T-cell (primary cell): ENCODE measurements at regions of chr6 and their contacts with region 1.

Region 1: GRCh38 chr6:32413427-32414047 is 6.6 kb upstream of the BTNL2 start:
- DNase-seq: peak; percentile 57 to 92 (median 79)
- ATAC-seq: peak; percentile 86 to 90 (median 88)
- H3K4me3 ChIP-seq: no peak overlapping the region
- H3K4me3 Mint-ChIP-seq: no peak overlapping the region
- H3K27ac ChIP-seq: no peak overlapping the region
- H3K27ac Mint-ChIP-seq: peak overlapping the region in 1 of 2 donors; percentile 50
- H3K4me1 ChIP-seq: peaks cover 0 to 9% of the 10 kb centered on the region in 2 experiments
- H3K4me1 Mint-ChIP-seq: peaks cover 11 to 16% (median 11%) of the 10 kb centered on the region in 3 donors
- H3K27me3 ChIP-seq: peaks cover 5 to 26% of the 10 kb centered on the region in 2 experiments
- H3K27me3 Mint-ChIP-seq: peaks cover 43 to 47% of the 10 kb centered on the region in 2 donors

Region 2: DNA sequence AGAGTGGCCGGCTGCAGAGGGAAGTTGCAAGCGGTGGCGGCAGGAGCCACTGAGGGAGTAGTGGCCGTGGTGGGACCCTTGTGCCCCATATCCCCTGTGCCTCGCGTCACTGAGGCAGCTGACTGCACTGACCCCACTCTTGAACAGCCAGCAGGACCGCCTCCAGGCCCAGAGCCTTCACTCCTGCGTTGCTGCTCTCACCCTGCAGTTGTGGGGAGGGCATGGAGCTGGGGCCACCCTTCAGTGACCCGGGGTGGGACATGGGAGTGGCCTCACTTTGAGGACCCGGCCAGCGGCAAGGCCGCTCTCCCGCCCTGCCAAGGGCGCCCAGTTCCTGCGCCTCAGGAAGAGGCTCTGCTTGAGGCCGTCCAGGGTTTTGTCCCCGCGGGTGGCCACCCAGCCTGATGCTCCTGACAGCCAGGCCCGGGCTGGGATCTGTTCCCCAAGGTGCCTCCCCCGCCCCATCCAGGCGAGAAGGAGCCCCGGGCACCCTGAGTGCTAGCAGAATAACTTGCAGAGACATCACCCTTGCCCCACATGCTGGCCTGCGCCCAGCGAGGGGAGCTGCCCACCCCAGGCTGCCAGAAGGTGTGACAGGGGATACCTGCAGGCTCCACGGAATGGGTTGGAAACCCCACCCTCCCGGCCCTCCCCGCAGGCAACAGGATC is 70.6 kb after region 1 on chr6:
- CTCF ChIA-PET with region 1: no interaction called
- POLR2A ChIA-PET with region 1: no interaction called
- DNase-seq: no peak
- ATAC-seq: no peak
- H3K4me3 ChIP-seq: no peak overlapping the region
- H3K4me3 Mint-ChIP-seq: no peak overlapping the region
- H3K27ac ChIP-seq: no peak overlapping the region
- H3K27ac Mint-ChIP-seq: no peak overlapping the region
- H3K4me1 ChIP-seq: no peaks in the 10 kb centered on the region
- H3K4me1 Mint-ChIP-seq: no peaks in the 10 kb centered on the region
- H3K27me3 ChIP-seq: no peaks in the 10 kb centered on the region
- H3K27me3 Mint-ChIP-seq: peaks cover 1 to 16% of the 10 kb centered on the region in 2 donors

Region 3: GRCh38 chr6:32539839-32540238 is 126.3 kb after region 1 on chr6:
- CTCF ChIA-PET with region 1: no interaction called
- POLR2A ChIA-PET with region 1: no interaction called
- DNase-seq: no peak
- ATAC-seq: no peak
- H3K4me3 ChIP-seq: no peak overlapping the region
- H3K4me3 Mint-ChIP-seq: no peak overlapping the region
- H3K27ac ChIP-seq: no peak overlapping the region
- H3K27ac Mint-ChIP-seq: no peak overlapping the region
- H3K4me1 ChIP-seq: no peaks in the 10 kb centered on the region
- H3K4me1 Mint-ChIP-seq: no peaks in the 10 kb centered on the region
- H3K27me3 ChIP-seq: no peaks in the 10 kb centered on the region
- H3K27me3 Mint-ChIP-seq: peaks cover 0 to 11% of the 10 kb centered on the region in 2 donors

Region 4: GRCh38 chr6:32700391-32701040 is 287.0 kb after region 1 on chr6:
- CTCF ChIA-PET with region 1: interaction called, 3 to 19 read pairs
- POLR2A ChIA-PET with region 1: interaction called in 1 of 2 experiments, 6 read pairs
- DNase-seq: peak in 17 of 35 experiments; percentile 1 to 71 (median 10)
- ATAC-seq: peak in 2 of 4 experiments; percentile 50 to 70
- H3K4me3 ChIP-seq: no peak overlapping the region
- H3K4me3 Mint-ChIP-seq: no peak overlapping the region
- H3K27ac ChIP-seq: no peak overlapping the region
- H3K27ac Mint-ChIP-seq: no peak overlapping the region
- H3K4me1 ChIP-seq: peaks cover 0 to 3% of the 10 kb centered on the region in 2 experiments
- H3K4me1 Mint-ChIP-seq: peaks cover 0 to 6% (median 5%) of the 10 kb centered on the region in 3 donors
- H3K27me3 ChIP-seq: peaks cover 0 to 2% of the 10 kb centered on the region in 2 experiments
- H3K27me3 Mint-ChIP-seq: peaks cover 39 to 42% of the 10 kb centered on the region in 2 donors

Region 5: GRCh38 chr6:32785781-32786533 is 372.4 kb after region 1 on chr6:
- CTCF ChIA-PET with region 1: interaction called, 6 to 18 read pairs
- POLR2A ChIA-PET with region 1: no interaction called
- DNase-seq: peak in 12 of 35 experiments; percentile 8 to 66 (median 18)
- ATAC-seq: peak in 3 of 4 experiments; percentile 53 to 71 (median 67)
- H3K4me3 ChIP-seq: no peak overlapping the region
- H3K4me3 Mint-ChIP-seq: no peak overlapping the region
- H3K27ac ChIP-seq: no peak overlapping the region
- H3K27ac Mint-ChIP-seq: no peak overlapping the region
- H3K4me1 ChIP-seq: no peaks in the 10 kb centered on the region
- H3K4me1 Mint-ChIP-seq: no peaks in the 10 kb centered on the region
- H3K27me3 ChIP-seq: no peaks in the 10 kb centered on the region
- H3K27me3 Mint-ChIP-seq: peaks cover 41 to 43% of the 10 kb centered on the region in 2 donors